K562 (cell line): ENCODE measurements at regions of chr5 and their contacts with region 1.

Region 1: GRCh38 chr5:75363726-75364495 is 26.9 kb downstream of the HMGCR start:
- DNase-seq: peak in 1 of 4 experiments; percentile 4
- ATAC-seq: peak; percentile 10; the same call in 1 of the 3 replicates
- H3K4me3 ChIP-seq: no peak overlapping the region
- H3K27ac ChIP-seq: no peak overlapping the region
- H3K4me1 ChIP-seq: peaks cover 0 to 3% of the 10 kb centered on the region in 2 experiments; a peak in 1 of 5 replicates
- H3K27me3 ChIP-seq: no peaks in the 10 kb centered on the region
- CTCF ChIP-seq: no peak
- EP300 ChIP-seq: no peak
- POLR2A ChIP-seq: peak; percentile 68
- RAD21 ChIP-seq: no peak

Region 2: DNA sequence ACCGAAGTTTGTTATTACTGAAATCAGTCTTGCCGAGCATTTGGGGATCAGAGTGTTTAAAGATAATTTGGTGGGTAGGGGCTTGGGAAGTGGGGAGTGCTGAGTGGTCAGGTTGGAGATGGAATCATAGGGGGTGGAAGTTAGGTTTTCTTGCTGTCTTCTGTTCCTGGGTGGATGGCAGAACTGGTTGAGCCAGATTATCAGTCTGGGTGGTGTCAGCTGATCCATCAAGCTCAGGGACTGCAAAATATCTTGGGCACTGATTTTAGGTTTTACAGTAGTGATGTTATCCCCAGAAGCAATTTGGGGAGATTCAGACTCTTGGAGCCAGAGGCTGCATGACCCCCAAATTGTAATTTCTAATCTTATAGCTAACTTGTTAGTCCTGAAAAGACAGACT is 121.8 kb before region 1 on chr5:
- CTCF ChIA-PET with region 1: no interaction called
- POLR2A ChIA-PET with region 1: no interaction called
- in situ Hi-C with region 1: no loop called
- intact Hi-C with region 1: no loop called
- DNase-seq: no peak
- ATAC-seq: no peak
- H3K4me3 ChIP-seq: no peak overlapping the region
- H3K27ac ChIP-seq: no peak overlapping the region
- H3K4me1 ChIP-seq: peaks cover under 1 to 4% of the 10 kb centered on the region in 2 experiments; a peak in 1 of 5 replicates
- H3K27me3 ChIP-seq: peaks cover 9 to 11% of the 10 kb centered on the region in 2 experiments; a peak in 3 of 5 replicates
- CTCF ChIP-seq: no peak
- EP300 ChIP-seq: no peak
- POLR2A ChIP-seq: no peak
- RAD21 ChIP-seq: no peak

Region 3: DNA sequence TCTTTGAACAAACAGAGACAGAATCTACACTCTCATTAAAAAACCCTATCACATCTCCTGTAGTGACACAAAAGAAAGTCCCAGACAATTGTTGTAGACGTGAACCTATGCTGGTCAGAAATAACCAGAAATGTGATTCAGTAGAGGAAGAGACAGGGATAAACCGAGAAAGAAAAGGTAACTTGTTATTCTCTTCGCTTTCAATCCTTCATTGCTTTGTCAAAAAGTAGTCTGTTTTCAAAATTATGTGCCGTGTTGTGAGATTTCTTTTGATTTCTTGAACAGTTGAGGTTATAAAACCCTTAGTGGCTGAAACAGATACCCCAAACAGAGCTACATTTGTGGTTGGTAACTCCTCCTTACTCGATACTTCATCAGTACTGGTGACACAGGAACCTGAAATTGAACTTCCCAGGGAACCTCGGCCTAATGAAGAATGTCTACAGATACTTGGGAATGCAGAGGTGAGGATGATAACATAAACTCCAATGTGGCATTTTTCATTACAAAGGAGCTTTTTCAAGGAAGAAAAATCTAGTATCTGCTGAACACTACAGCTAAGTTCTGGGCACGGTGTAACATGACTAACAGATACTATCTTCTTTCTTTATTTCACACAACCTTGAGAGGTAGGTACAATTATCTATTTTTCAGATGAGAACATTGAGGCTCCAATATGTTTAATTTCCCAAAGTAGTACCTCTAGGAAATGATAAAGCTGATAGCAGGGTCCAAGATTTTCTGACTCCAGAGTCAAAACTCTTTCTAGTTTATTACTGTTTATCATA is 12.6 kb before region 1 on chr5:
- CTCF ChIA-PET with region 1: no interaction called
- POLR2A ChIA-PET with region 1: interaction called, 12 read pairs
- in situ Hi-C with region 1: no loop called
- intact Hi-C with region 1: no loop called
- DNase-seq: no peak
- ATAC-seq: no peak
- H3K4me3 ChIP-seq: no peak overlapping the region
- H3K27ac ChIP-seq: no peak overlapping the region
- H3K4me1 ChIP-seq: no peaks in the 10 kb centered on the region
- H3K27me3 ChIP-seq: no peaks in the 10 kb centered on the region
- CTCF ChIP-seq: no peak
- EP300 ChIP-seq: no peak
- POLR2A ChIP-seq: no peak
- RAD21 ChIP-seq: no peak

Region 4: DNA sequence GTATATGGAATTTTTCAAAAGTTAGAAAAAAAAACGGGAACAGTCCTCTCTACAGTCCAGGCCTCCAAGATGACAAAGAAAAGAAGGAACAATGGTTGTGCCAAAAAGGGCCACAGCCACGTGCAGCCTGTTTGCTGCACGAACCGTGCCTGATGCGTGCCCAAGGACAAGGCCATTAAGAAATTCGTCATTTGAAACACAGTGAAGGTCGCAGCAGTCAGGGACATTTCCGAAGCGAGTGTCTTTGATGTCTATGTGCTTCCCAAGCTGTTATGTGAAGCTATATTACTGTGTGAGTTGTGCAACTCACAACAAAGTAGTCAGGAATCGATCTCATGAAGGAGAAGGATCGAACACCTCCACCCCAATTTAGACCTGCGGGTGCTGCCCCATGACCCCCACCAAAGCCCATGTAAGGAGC is 10.5 kb after region 1 on chr5:
- CTCF ChIA-PET with region 1: no interaction called
- POLR2A ChIA-PET with region 1: interaction called, 15 read pairs
- in situ Hi-C with region 1: no loop called
- intact Hi-C with region 1: no loop called
- DNase-seq: no peak
- ATAC-seq: no peak
- H3K4me3 ChIP-seq: no peak overlapping the region
- H3K27ac ChIP-seq: no peak overlapping the region
- H3K4me1 ChIP-seq: no peaks in the 10 kb centered on the region
- H3K27me3 ChIP-seq: no peaks in the 10 kb centered on the region
- CTCF ChIP-seq: no peak
- EP300 ChIP-seq: no peak
- POLR2A ChIP-seq: no peak
- RAD21 ChIP-seq: no peak

Region 5: GRCh38 chr5:75381456-75381855 is 17.5 kb after region 1 on chr5:
- CTCF ChIA-PET with region 1: no interaction called
- POLR2A ChIA-PET with region 1: interaction called, 13 read pairs
- in situ Hi-C with region 1: no loop called
- intact Hi-C with region 1: no loop called
- DNase-seq: peak; percentile 15 to 75 (median 34)
- ATAC-seq: peak; percentile 97
- H3K4me3 ChIP-seq: no peak overlapping the region
- H3K27ac ChIP-seq: peak overlapping the region; percentile 60; the same call in 2 of the 3 replicates
- H3K4me1 ChIP-seq: peaks cover 0 to 11% of the 10 kb centered on the region in 2 experiments
- H3K27me3 ChIP-seq: no peaks in the 10 kb centered on the region
- CTCF ChIP-seq: no peak
- EP300 ChIP-seq: peak; percentile 66
- POLR2A ChIP-seq: no peak
- RAD21 ChIP-seq: no peak

Region 6: DNA sequence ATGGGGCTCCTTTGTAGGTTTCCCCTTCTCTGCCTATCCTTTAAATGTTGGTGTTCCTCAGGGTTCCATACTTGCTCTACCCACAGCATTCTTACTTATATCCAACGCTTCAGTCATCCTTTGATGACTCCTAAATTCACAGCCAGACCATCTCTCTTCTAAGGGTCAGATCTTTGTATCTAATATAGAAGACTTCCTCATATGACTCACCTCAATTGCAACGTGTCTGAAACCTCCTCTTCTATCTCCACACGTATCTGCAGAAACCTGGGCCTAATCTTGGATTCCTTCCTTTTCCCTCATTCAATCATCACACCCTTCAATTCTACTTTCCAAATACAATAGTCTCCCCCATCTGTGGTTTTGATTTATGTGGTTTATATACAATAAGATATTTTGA is 41.4 kb after region 1 on chr5:
- CTCF ChIA-PET with region 1: no interaction called
- POLR2A ChIA-PET with region 1: no interaction called
- in situ Hi-C with region 1: no loop called
- intact Hi-C with region 1: no loop called
- DNase-seq: no peak
- ATAC-seq: peak; percentile 35; the same call in 1 of the 3 replicates
- H3K4me3 ChIP-seq: no peak overlapping the region
- H3K27ac ChIP-seq: no peak overlapping the region
- H3K4me1 ChIP-seq: no peaks in the 10 kb centered on the region
- H3K27me3 ChIP-seq: no peaks in the 10 kb centered on the region
- CTCF ChIP-seq: no peak
- EP300 ChIP-seq: no peak
- POLR2A ChIP-seq: no peak
- RAD21 ChIP-seq: no peak

Region 7: GRCh38 chr5:75433814-75434506 is 70.0 kb after region 1 on chr5:
- CTCF ChIA-PET with region 1: no interaction called
- POLR2A ChIA-PET with region 1: no interaction called
- in situ Hi-C with region 1: no loop called
- intact Hi-C with region 1: no loop called
- DNase-seq: no peak
- ATAC-seq: no peak
- H3K4me3 ChIP-seq: no peak overlapping the region
- H3K27ac ChIP-seq: no peak overlapping the region
- H3K4me1 ChIP-seq: no peaks in the 10 kb centered on the region
- H3K27me3 ChIP-seq: no peaks in the 10 kb centered on the region
- CTCF ChIP-seq: no peak
- EP300 ChIP-seq: no peak
- POLR2A ChIP-seq: no peak
- RAD21 ChIP-seq: no peak

Region 8: GRCh38 chr5:76230711-76231285 is 866.9 kb after region 1 on chr5:
- CTCF ChIA-PET with region 1: no interaction called
- POLR2A ChIA-PET with region 1: no interaction called
- in situ Hi-C with region 1: no loop called
- intact Hi-C with region 1: no loop called
- DNase-seq: no peak
- ATAC-seq: no peak
- H3K4me3 ChIP-seq: no peak overlapping the region
- H3K27ac ChIP-seq: no peak overlapping the region
- H3K4me1 ChIP-seq: no peaks in the 10 kb centered on the region; a peak in 2 of 5 replicates
- H3K27me3 ChIP-seq: peaks cover 5 to 13% of the 10 kb centered on the region in 2 experiments; a peak in 3 of 5 replicates
- CTCF ChIP-seq: no peak
- EP300 ChIP-seq: no peak
- POLR2A ChIP-seq: no peak
- RAD21 ChIP-seq: no peak